ENCODE measurements at regions of chr11 and their contacts with region 1.

Region 1: GRCh38 chr11:6353367-6353987 is 33.2 kb upstream of the CAVIN3 start:
- DNase-seq: peak; percentile 26 to 73 (median 55)
- ATAC-seq: peak; percentile 75
- H3K4me3 ChIP-seq: no peak overlapping the region
- H3K4me3 Mint-ChIP-seq: no peak overlapping the region
- H3K27ac ChIP-seq: no peak overlapping the region
- H3K27ac Mint-ChIP-seq: no peak overlapping the region
- H3K4me1 ChIP-seq: no peaks in the 10 kb centered on the region
- H3K4me1 Mint-ChIP-seq: peaks cover 2% of the 10 kb centered on the region
- H3K27me3 ChIP-seq: no peaks in the 10 kb centered on the region
- H3K27me3 Mint-ChIP-seq: no peaks in the 10 kb centered on the region
- CTCF ChIP-seq: peak; percentile 92

Region 2: GRCh38 chr11:4636962-4637661 is 1716.4 kb before region 1 on chr11 and contains the start of gene OR51D1:
- CTCF ChIA-PET with region 1: interaction called, 4 read pairs
- POLR2A ChIA-PET with region 1: no interaction called
- intact Hi-C with region 1: loop called (anchors 2 to 5 kb)
- DNase-seq: peak; percentile 47 to 77 (median 68)
- ATAC-seq: peak; percentile 91
- H3K4me3 ChIP-seq: peak within 1 kb of the TSS in 1 of 2 experiments; percentile 37
- H3K4me3 Mint-ChIP-seq: no peak within 1 kb of the TSS
- H3K27ac ChIP-seq: no peak within 1 kb of the TSS
- H3K27ac Mint-ChIP-seq: no peak within 1 kb of the TSS
- H3K4me1 ChIP-seq: no peaks in the 10 kb centered on the region
- H3K4me1 Mint-ChIP-seq: no peaks in the 10 kb centered on the region
- H3K27me3 ChIP-seq: no peaks in the 10 kb centered on the region
- H3K27me3 Mint-ChIP-seq: peaks cover 12% of the 10 kb centered on the region
- CTCF ChIP-seq: peak; percentile 89
- total RNA-seq, gene OR51D1: not detected

Region 3: GRCh38 chr11:5600374-5600851 is 753.1 kb before region 1 on chr11:
- CTCF ChIA-PET with region 1: no interaction called
- POLR2A ChIA-PET with region 1: no interaction called
- intact Hi-C with region 1: loop called in 1 of 2 experiments (anchors 5 kb)
- DNase-seq: peak; percentile 10 to 77 (median 58)
- ATAC-seq: peak; percentile 89
- H3K4me3 ChIP-seq: no peak overlapping the region
- H3K4me3 Mint-ChIP-seq: no peak overlapping the region
- H3K27ac ChIP-seq: no peak overlapping the region
- H3K27ac Mint-ChIP-seq: no peak overlapping the region
- H3K4me1 ChIP-seq: no peaks in the 10 kb centered on the region
- H3K4me1 Mint-ChIP-seq: peaks cover 4% of the 10 kb centered on the region
- H3K27me3 ChIP-seq: no peaks in the 10 kb centered on the region
- H3K27me3 Mint-ChIP-seq: peaks cover 4% of the 10 kb centered on the region
- CTCF ChIP-seq: peak; percentile 68

Region 4: DNA sequence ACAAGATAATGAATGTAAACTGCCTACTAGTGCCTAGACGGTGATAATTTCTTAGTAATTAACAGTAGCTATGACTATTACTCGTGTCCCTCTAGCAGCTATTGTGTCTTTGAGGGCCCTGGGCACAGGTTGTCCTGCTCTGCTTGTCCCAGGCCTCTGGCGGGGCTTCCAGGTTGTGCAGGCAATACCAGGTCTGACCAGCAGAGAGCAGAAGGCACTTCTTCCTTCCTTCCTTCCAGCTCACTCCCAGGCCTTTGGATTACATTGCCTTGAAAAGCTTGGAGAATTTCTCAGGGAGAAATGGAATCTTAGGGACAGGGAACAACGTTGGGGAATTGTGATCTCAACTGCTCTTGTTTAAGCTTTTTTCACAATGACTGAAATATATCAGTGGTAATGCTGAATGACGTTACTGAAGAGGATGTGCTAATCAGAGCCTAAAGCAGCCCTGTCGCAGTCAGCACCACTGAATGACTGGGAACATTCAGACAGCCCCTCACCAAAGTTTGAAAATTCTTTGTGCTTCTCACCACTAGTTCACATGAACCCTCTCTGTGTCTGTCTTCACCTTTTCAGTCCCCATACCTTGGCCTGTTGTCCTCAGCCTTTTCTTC is 102.2 kb before region 1 on chr11:
- CTCF ChIA-PET with region 1: interaction called, 34 read pairs
- POLR2A ChIA-PET with region 1: no interaction called
- intact Hi-C with region 1: loop called (anchors 1 kb)
- DNase-seq: peak in 7 of 9 experiments; percentile 14 to 59 (median 47)
- ATAC-seq: peak; percentile 83
- H3K4me3 ChIP-seq: no peak overlapping the region
- H3K4me3 Mint-ChIP-seq: no peak overlapping the region
- H3K27ac ChIP-seq: no peak overlapping the region
- H3K27ac Mint-ChIP-seq: no peak overlapping the region
- H3K4me1 ChIP-seq: no peaks in the 10 kb centered on the region
- H3K4me1 Mint-ChIP-seq: no peaks in the 10 kb centered on the region
- H3K27me3 ChIP-seq: no peaks in the 10 kb centered on the region
- H3K27me3 Mint-ChIP-seq: no peaks in the 10 kb centered on the region
- CTCF ChIP-seq: peak; percentile 56

Region 5: GRCh38 chr11:6333112-6333511 is 20.4 kb before region 1 on chr11:
- CTCF ChIA-PET with region 1: interaction called, 13 read pairs
- POLR2A ChIA-PET with region 1: no interaction called
- intact Hi-C with region 1: no loop called
- DNase-seq: no peak
- ATAC-seq: no peak
- H3K4me3 ChIP-seq: no peak overlapping the region
- H3K4me3 Mint-ChIP-seq: no peak overlapping the region
- H3K27ac ChIP-seq: no peak overlapping the region
- H3K27ac Mint-ChIP-seq: no peak overlapping the region
- H3K4me1 ChIP-seq: no peaks in the 10 kb centered on the region
- H3K4me1 Mint-ChIP-seq: no peaks in the 10 kb centered on the region
- H3K27me3 ChIP-seq: no peaks in the 10 kb centered on the region
- H3K27me3 Mint-ChIP-seq: peaks cover 11% of the 10 kb centered on the region
- CTCF ChIP-seq: no peak

Region 6: GRCh38 chr11:6757373-6757967 is 404.0 kb after region 1 on chr11:
- CTCF ChIA-PET with region 1: no interaction called
- POLR2A ChIA-PET with region 1: no interaction called
- intact Hi-C with region 1: no loop called
- DNase-seq: peak; percentile 30 to 82 (median 65)
- ATAC-seq: peak; percentile 80
- H3K4me3 ChIP-seq: no peak overlapping the region
- H3K4me3 Mint-ChIP-seq: no peak overlapping the region
- H3K27ac ChIP-seq: no peak overlapping the region
- H3K27ac Mint-ChIP-seq: no peak overlapping the region
- H3K4me1 ChIP-seq: no peaks in the 10 kb centered on the region
- H3K4me1 Mint-ChIP-seq: peaks cover 15% of the 10 kb centered on the region
- H3K27me3 ChIP-seq: no peaks in the 10 kb centered on the region
- H3K27me3 Mint-ChIP-seq: no peaks in the 10 kb centered on the region
- CTCF ChIP-seq: peak; percentile 74